ENCODE measurements at regions of chr9 and their contacts with region 1.

Region 1: DNA sequence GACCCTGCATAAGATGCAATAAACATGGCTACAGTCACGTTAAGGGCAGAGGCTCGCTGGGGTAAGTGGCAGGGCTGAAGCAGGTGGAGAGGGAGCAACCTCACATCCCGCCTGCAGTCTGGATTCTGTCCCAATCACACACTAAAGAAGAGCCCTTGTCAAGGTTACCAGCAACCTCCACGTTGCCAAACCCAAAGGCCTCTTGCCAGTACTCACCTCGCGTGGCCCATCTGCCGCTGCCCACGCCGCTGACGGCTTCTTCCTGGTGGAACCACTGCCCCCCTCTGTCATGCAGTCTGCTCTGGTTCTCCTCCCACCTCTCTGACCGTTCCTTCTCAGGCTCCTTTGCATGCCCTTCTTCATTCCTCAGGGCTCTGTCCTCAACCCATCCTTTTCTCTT is 8.8 kb downstream of the AQP7 start:
- DNase-seq: no peak
- H3K4me3 ChIP-seq: no peak overlapping the region
- H3K27ac ChIP-seq: no peak overlapping the region
- H3K4me1 ChIP-seq: peaks cover 0 to 4% (median 0%) of the 10 kb centered on the region in 4 experiments; a peak in 1 of 7 replicates
- H3K27me3 ChIP-seq: no peaks in the 10 kb centered on the region
- CTCF ChIP-seq: no peak
- EP300 ChIP-seq: no peak
- POLR2A ChIP-seq: no peak
- RAD21 ChIP-seq: no peak

Region 2: GRCh38 chr9:33381231-33381791 is 12.3 kb before region 1 on chr9:
- CTCF ChIA-PET with region 1: interaction called, 38 read pairs
- POLR2A ChIA-PET with region 1: interaction called, 14 read pairs
- DNase-seq: peak; percentile 70 to 85
- H3K4me3 ChIP-seq: peak overlapping the region in 2 of 4 experiments; percentile 7 to 38; a peak in 1 of 8 replicates
- H3K27ac ChIP-seq: peak overlapping the region; percentile 65
- H3K4me1 ChIP-seq: peaks cover 2 to 6% (median 5%) of the 10 kb centered on the region in 4 experiments; a peak in 5 of 7 replicates
- H3K27me3 ChIP-seq: no peaks in the 10 kb centered on the region
- CTCF ChIP-seq: no peak
- EP300 ChIP-seq: peak in 1 of 2 experiments; percentile 87; a peak in 1 of 3 replicates
- POLR2A ChIP-seq: no peak
- RAD21 ChIP-seq: no peak

Region 3: GRCh38 chr9:33404788-33405362 is 11.3 kb after region 1 on chr9:
- CTCF ChIA-PET with region 1: interaction called, 20 read pairs
- POLR2A ChIA-PET with region 1: interaction called, 4 read pairs
- DNase-seq: no peak
- H3K4me3 ChIP-seq: no peak overlapping the region
- H3K27ac ChIP-seq: no peak overlapping the region
- H3K4me1 ChIP-seq: no peaks in the 10 kb centered on the region
- H3K27me3 ChIP-seq: no peaks in the 10 kb centered on the region
- CTCF ChIP-seq: no peak
- EP300 ChIP-seq: no peak
- POLR2A ChIP-seq: no peak
- RAD21 ChIP-seq: no peak